ENCODE measurements at regions of chr11 and their contacts with region 1.

Region 1: DNA sequence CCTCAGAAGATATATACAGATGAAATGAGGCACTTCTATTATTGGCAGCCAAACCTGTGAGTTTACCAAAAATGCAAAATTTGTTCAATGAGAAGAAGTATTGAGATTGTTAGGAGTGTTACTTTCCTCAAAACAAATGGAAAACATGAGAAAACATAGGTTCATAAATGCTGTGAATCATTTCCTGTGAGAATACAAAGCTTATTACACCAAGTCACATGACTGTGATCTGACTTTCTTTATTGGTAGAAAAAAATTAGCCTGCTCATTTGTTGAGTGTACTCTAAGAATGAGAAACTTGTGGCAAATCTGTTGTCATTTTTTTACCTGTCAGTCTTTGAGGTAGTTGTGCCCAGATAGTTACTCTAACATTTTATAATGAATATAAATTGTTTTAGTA is 215.1 kb downstream of the TMEM135 start:
- DNase-seq: no peak
- H3K4me3 ChIP-seq: no peak overlapping the region
- H3K27ac ChIP-seq: no peak overlapping the region
- H3K4me1 ChIP-seq: no peaks in the 10 kb centered on the region
- H3K27me3 ChIP-seq: no peaks in the 10 kb centered on the region
- CTCF ChIP-seq: no peak

Region 2: DNA sequence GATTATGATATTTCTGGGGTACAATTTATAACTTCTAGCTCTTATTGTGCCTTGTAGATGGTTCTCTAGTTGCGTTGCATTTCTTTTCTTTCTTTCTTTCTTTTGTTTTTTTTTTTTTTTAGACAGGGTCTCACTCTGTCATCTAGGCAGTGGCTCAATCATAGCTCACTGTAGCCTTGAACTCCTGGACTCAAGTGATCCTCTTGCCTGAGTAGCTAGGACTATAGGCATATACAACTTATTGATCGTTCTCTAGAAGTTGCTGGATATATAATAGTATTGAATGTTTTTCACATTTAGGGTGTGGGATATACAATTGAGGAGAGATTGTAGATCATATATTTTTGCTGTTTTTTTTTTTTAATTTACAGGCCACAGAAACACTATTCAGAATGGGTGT is 95.9 kb before region 1 on chr11:
- CTCF ChIA-PET with region 1: no interaction called
- POLR2A ChIA-PET with region 1: interaction called, 10 read pairs
- intact Hi-C with region 1: no loop called
- DNase-seq: no peak
- H3K4me3 ChIP-seq: no peak overlapping the region
- H3K27ac ChIP-seq: no peak overlapping the region
- H3K4me1 ChIP-seq: no peaks in the 10 kb centered on the region
- H3K27me3 ChIP-seq: no peaks in the 10 kb centered on the region
- CTCF ChIP-seq: no peak

Measured in PC-9 (cell line).